ENCODE measurements at regions of chr12 and their contacts with region 1.

Region 1: GRCh38 chr12:132475304-132476037 is 14.5 kb upstream of the FBRSL1 start:
- DNase-seq: peak in 9 of 10 donors; percentile 24 to 81 (median 48)
- ATAC-seq: peak; percentile 73 to 82
- H3K4me3 Mint-ChIP-seq: peak overlapping the region; percentile 36 to 78 (median 68)
- H3K27ac Mint-ChIP-seq: peak overlapping the region in 8 of 10 donors; percentile 24 to 95 (median 74)
- H3K4me1 Mint-ChIP-seq: peaks cover 18 to 62% (median 44%) of the 10 kb centered on the region in 4 donors
- H3K27me3 Mint-ChIP-seq: no peaks in the 10 kb centered on the region

Region 2: GRCh38 chr12:132437252-132437932 is 38.1 kb before region 1 on chr12:
- POLR2A ChIA-PET with region 1: interaction called, 12 read pairs
- DNase-seq: no peak
- ATAC-seq: peak; percentile 29 to 41
- H3K4me3 Mint-ChIP-seq: peak overlapping the region in 9 of 10 donors; percentile 36 to 83 (median 72)
- H3K27ac Mint-ChIP-seq: peak overlapping the region in 8 of 10 donors; percentile 31 to 93 (median 86)
- H3K4me1 Mint-ChIP-seq: peaks cover 21 to 66% (median 63%) of the 10 kb centered on the region in 4 donors
- H3K27me3 Mint-ChIP-seq: no peaks in the 10 kb centered on the region